ENCODE measurements at regions of chr1 and their contacts with region 1.

Region 1: DNA sequence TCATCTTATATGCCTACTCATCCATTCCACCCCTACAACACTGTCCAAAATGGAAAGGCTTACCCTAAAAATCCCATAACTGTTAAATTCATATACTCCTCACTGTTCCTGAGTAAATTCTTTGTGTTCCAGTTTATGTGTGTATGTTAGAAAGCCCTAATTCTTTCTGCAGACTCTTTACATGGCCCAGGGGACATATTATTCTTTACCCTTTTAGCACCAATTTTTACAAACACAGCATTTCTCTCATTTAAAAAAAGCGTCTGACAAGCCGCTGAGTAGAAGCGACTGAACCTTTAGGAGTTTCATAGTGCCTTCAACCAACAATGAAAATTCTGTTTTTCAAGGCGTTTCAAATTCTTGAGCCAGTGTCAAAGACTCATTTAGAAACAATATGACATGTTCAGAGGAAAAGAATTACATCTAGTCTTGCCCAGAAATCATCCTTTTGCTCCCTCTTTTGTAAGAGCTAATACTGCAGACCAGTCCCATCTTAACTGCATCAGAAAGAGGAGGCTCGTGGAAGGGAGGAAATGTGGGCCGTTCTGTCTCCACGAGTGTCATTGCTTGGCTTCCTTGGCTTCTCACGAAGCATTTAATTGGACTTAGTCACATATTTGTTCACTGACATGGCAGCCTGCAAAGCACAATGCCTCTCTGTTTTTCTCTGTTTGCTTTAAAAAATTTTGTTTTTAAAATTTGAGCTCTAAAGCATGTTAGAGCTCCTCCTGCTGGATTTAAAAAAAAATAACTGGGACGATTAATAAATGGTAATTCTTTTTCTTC is 21.3 kb upstream of the C1orf105 start:
- DNase-seq: peak; percentile 36 to 68 (median 59)
- H3K4me3 ChIP-seq: peak overlapping the region in 4 of 7 experiments; percentile 15 to 67 (median 36)
- H3K27ac ChIP-seq: no peak overlapping the region
- H3K4me1 ChIP-seq: peaks cover 6 to 11% (median 7%) of the 10 kb centered on the region in 4 experiments
- H3K27me3 ChIP-seq: no peaks in the 10 kb centered on the region

Region 2: GRCh38 chr1:172089768-172090510 is 309.2 kb before region 1 on chr1:
- CTCF ChIA-PET with region 1: interaction called, 66 read pairs
- POLR2A ChIA-PET with region 1: no interaction called
- DNase-seq: peak; percentile 59 to 74 (median 73)
- H3K4me3 ChIP-seq: no peak overlapping the region
- H3K27ac ChIP-seq: no peak overlapping the region
- H3K4me1 ChIP-seq: no peaks in the 10 kb centered on the region
- H3K27me3 ChIP-seq: no peaks in the 10 kb centered on the region

Measured in common myeloid progenitor, CD34-positive (primary cell).